Activated T-helper 1 cell treated with anti-CD3 and anti-CD28 coated beads, Interleukin-12 subunit alpha, Interleukin-12 subunit beta, Interleukin-2, Interleukin-4 antibody, amounts not matched to agents 30 ng/mL and 10 ng/mL and 1 ng/mL, durations not matched to agents 14 hours and 24 hours and 36 hours (primary cell): ENCODE measurements at regions of chr6 and their contacts with region 1.

Region 1: GRCh38 chr6:73461537-73462350 is at the start of gene MTO1:
- DNase-seq: peak; percentile 74
- H3K4me3 Mint-ChIP-seq: peak within 1 kb of the TSS; percentile 100
- H3K27ac Mint-ChIP-seq: peak within 1 kb of the TSS; percentile 100
- H3K4me1 Mint-ChIP-seq: peaks cover 54% of the 10 kb centered on the region
- H3K27me3 Mint-ChIP-seq: no peaks in the 10 kb centered on the region
- total RNA-seq, gene MTO1: 33.3 and 45.8 TPM in 2 replicates

Region 2: GRCh38 chr6:73451223-73452107 is 10.3 kb before region 1 on chr6:
- intact Hi-C with region 1: loop called (anchors 1 kb)
- DNase-seq: peak; percentile 22
- H3K4me3 Mint-ChIP-seq: peak overlapping the region; percentile 97
- H3K27ac Mint-ChIP-seq: peak overlapping the region; percentile 87
- H3K4me1 Mint-ChIP-seq: peaks cover 35% of the 10 kb centered on the region
- H3K27me3 Mint-ChIP-seq: no peaks in the 10 kb centered on the region

Region 3: DNA sequence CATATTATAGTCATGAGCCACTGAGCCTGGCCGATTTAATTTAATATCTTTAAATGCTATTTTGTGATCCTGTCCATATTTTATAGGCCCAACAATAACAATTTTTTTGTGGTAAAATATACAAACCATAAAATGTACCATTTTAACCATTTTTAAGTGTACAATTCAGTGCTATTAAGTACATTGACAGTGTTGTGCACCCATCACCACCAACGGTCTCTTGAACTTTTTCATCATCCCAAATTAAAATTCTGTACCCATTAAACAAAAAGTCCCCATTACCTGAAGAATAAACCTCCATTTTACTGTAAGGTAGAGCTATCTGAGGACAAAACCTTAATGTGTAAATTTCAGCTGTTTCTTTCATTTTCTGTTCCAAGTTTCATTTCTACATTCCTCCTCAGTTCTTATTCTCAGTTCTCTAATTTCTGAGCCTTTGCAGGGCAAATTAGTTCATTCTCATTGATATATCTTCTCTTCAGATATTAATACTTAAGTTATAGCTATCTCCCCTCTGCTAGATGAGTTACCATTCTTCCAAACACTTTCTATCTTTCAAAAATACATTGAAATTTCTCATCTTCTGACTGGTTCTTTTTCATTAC is 10.0 kb after region 1 on chr6:
- intact Hi-C with region 1: loop called (anchors 1 kb)
- DNase-seq: no peak
- H3K4me3 Mint-ChIP-seq: peak overlapping the region; percentile 70
- H3K27ac Mint-ChIP-seq: peak overlapping the region; percentile 66
- H3K4me1 Mint-ChIP-seq: peaks cover 22% of the 10 kb centered on the region
- H3K27me3 Mint-ChIP-seq: no peaks in the 10 kb centered on the region

Region 4: DNA sequence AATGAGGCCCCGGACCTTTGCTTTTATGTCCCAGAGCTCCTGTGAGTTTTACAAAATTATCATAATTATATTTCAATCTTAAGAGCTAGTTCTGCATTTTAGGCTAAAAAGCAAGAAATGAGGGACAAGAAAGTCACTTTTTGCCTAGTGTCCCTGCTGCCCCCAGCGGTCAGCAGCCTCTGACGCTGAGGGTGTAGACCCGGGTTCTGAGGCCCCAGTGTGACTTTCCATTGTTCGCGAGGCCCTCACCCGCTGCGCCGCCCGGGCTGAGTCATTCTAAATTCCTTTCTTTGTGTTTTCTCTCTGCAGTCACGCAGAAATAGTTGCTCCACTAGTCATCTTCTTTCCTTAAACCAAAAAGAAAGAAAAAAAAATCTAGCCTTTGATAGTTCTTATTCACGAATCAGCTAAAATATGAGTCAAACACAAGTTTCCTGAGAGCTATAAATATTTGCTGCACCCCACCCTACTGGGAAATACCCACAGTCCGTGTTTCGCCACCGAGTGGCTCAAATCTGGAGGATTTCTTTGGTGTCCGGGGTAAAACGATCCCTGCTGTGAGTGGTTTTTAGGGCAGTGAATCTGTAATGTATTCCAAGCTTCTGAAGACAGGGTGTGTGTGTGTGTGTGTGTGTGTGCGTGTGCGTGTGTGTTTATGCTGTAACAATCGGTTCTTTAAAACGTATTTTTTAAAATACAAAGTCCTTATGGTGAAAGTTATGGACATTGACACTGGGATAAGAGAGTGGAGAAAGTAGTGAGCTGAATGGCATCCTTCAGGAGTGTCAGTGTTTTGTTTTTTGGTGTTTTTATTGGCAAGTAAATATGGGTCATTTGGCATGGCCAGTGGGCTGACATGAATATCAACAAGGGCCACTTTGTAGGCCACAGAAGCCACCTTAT is 118.8 kb after region 1 on chr6:
- intact Hi-C with region 1: loop called (anchors 2 kb)
- DNase-seq: peak; percentile 47
- H3K4me3 Mint-ChIP-seq: peak overlapping the region; percentile 69
- H3K27ac Mint-ChIP-seq: peak overlapping the region; percentile 95
- H3K4me1 Mint-ChIP-seq: peaks cover 27% of the 10 kb centered on the region
- H3K27me3 Mint-ChIP-seq: no peaks in the 10 kb centered on the region

Region 5: DNA sequence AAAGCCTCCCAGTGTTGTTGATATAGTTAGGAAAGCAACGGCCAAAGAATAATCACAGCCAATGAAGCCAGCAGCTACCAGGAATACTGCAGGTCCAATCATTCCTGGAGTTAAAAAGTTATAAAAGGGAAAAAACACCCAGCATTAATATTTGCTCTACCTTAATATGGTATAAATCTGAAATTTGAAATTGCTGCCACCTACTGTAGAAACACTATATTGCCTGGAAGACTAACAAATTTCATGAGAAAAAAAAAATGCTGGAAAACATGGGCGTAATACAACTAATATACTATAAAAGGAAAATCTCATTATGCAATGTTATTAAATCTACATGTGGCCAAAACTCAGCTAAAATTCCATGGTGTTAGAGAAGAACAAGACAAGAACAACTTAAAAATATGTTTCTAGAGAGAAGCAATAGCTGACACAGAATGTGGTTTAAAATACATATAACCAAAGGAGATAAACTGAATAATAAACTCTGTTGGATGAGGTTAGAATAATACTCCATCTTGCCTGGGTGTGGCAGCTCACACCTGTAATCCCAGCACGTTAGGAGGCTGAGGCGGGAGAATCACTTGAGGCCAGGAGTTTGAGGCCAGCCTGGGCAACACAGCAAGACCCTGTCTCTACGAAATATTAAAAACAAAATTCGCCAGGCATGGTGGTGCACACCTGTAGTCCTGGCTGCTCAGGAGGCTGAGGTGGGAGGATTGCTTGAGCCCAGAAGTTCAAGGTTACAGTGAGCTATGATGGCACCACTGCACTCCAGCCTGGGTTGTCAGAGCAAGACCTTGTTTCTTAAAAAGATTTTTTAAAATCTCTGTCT is 148.9 kb after region 1 on chr6:
- intact Hi-C with region 1: loop called (anchors 5 kb)
- DNase-seq: no peak
- H3K4me3 Mint-ChIP-seq: no peak overlapping the region
- H3K27ac Mint-ChIP-seq: no peak overlapping the region
- H3K4me1 Mint-ChIP-seq: peaks cover 6% of the 10 kb centered on the region
- H3K27me3 Mint-ChIP-seq: no peaks in the 10 kb centered on the region

Region 6: DNA sequence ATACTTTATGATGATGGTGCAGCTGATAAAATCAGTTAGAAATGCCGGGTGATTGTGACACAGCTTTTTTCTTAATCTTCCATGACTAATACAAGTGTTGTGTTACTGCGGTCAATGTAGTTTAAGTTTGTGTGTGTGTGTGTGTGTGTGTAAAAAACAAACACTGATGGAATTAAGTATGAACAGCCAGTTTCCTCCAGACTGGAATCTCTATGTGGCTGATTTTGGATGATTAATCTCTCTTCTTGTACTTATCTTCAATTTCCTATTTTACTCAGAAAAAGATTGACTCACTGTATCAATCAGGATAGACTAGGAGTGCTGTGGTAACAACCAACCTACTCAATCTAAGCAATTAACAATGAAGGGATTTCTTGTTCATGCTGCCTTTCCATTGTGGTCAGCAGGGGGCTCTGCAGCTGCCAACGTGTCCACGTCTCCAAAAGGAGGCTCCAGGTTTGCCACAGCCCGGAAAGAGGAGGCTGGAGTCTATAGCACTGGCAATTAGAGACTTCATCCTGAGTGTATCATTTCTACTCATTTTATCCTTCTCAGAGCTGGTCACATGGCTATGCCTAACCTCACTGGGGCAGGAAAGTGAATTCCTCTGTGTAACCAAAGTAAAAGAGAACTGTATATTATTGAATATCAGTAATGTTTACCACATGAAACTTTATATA is 342.0 kb after region 1 on chr6:
- intact Hi-C with region 1: no loop called
- DNase-seq: no peak
- H3K4me3 Mint-ChIP-seq: no peak overlapping the region
- H3K27ac Mint-ChIP-seq: peak overlapping the region; percentile 13
- H3K4me1 Mint-ChIP-seq: peaks cover 21% of the 10 kb centered on the region
- H3K27me3 Mint-ChIP-seq: no peaks in the 10 kb centered on the region